B cell (primary cell): ENCODE measurements at regions of chr19 and their contacts with region 1.

Region 1: DNA sequence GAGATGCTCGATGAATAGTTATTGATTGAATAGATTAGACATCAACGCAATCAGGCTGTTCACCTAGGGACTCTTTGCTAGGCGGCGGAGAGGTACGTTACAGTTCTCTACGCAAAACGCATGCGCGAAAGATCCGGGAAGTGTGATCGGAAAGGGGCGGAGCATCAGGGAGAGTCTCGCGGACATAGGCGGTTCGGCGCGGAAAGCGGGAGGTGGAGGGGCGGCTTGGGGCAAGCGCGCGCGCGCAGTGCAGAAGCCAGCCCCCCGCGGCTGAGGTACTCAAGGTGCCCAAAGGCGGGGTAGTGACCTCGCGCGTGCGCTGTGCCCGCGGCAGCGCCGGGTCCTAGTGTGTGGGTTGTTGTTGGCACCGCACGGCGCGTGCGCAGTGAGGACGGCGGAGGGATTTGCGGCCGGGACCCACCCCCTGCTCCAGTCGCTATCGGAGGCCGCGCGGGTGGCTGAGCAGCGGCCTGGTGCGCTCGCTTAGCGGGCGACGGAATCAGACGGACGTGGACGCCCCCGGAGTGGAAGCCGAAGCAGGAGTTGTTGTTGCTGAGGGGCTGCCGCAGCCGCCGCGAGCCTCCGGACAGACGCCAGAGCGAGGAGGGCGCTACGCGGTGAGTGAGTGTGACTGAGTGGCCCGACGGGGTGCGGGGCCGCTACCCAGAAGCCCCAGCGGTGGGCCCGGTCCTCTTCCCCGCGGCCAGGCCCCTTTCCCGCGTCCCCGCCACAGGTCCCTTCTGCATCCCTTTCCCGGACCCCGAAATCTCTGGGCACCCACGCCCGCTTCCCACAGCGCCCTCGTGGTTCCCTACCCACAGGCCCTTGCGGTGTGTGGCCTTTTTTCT is at the start of gene SNRNP70:
- DNase-seq: peak; percentile 100
- ATAC-seq: peak; percentile 95
- H3K4me3 ChIP-seq: peak within 1 kb of the TSS; percentile 74 to 89 (median 82)
- H3K4me3 Mint-ChIP-seq: peak within 1 kb of the TSS; percentile 93
- H3K27ac ChIP-seq: peak within 1 kb of the TSS; percentile 66 to 90
- H3K27ac Mint-ChIP-seq: peak within 1 kb of the TSS; percentile 87
- H3K4me1 ChIP-seq: peaks cover 20 to 28% of the 10 kb centered on the region in 2 donors
- H3K4me1 Mint-ChIP-seq: peaks cover 33% of the 10 kb centered on the region
- H3K27me3 ChIP-seq: peaks cover 0 to 3% (median 0%) of the 10 kb centered on the region in 4 experiments
- H3K27me3 Mint-ChIP-seq: peaks cover 5% of the 10 kb centered on the region
- CTCF ChIP-seq: no peak
- total RNA-seq, gene SNRNP70: 598 and 610 TPM in 2 replicates

Region 2: GRCh38 chr19:48780631-48781391 is 304.4 kb before region 1 on chr19:
- CTCF ChIA-PET with region 1: no interaction called
- POLR2A ChIA-PET with region 1: no interaction called
- intact Hi-C with region 1: loop called (anchors 10 kb)
- DNase-seq: no peak
- ATAC-seq: no peak
- H3K4me3 ChIP-seq: no peak overlapping the region
- H3K4me3 Mint-ChIP-seq: no peak overlapping the region
- H3K27ac ChIP-seq: no peak overlapping the region
- H3K27ac Mint-ChIP-seq: peak overlapping the region; percentile 5
- H3K4me1 ChIP-seq: peaks cover 3 to 15% of the 10 kb centered on the region in 2 donors
- H3K4me1 Mint-ChIP-seq: peaks cover 19% of the 10 kb centered on the region
- H3K27me3 ChIP-seq: no peaks in the 10 kb centered on the region
- H3K27me3 Mint-ChIP-seq: no peaks in the 10 kb centered on the region
- CTCF ChIP-seq: no peak

Region 3: GRCh38 chr19:49189259-49189658 is 104.0 kb after region 1 on chr19:
- CTCF ChIA-PET with region 1: no interaction called
- POLR2A ChIA-PET with region 1: no interaction called
- intact Hi-C with region 1: no loop called
- DNase-seq: no peak
- ATAC-seq: no peak
- H3K4me3 ChIP-seq: no peak overlapping the region
- H3K4me3 Mint-ChIP-seq: no peak overlapping the region
- H3K27ac ChIP-seq: no peak overlapping the region
- H3K27ac Mint-ChIP-seq: no peak overlapping the region
- H3K4me1 ChIP-seq: no peaks in the 10 kb centered on the region
- H3K4me1 Mint-ChIP-seq: peaks cover 5% of the 10 kb centered on the region
- H3K27me3 ChIP-seq: peaks cover 0 to 7% (median 1%) of the 10 kb centered on the region in 4 experiments
- H3K27me3 Mint-ChIP-seq: peaks cover 12% of the 10 kb centered on the region
- CTCF ChIP-seq: no peak